ENCODE measurements at regions of chr6 and their contacts with region 1.

Region 1: GRCh38 chr6:37566111-37566949 is 66.6 kb upstream of the CCDC167 start:
- DNase-seq: peak; percentile 53 to 85 (median 62)
- H3K4me3 ChIP-seq: peak overlapping the region; percentile 30 to 71 (median 56)
- H3K27ac ChIP-seq: peak overlapping the region in 39 of 59 donors; percentile 9 to 82 (median 53)
- H3K27me3 ChIP-seq: no peaks in the 10 kb centered on the region
- CTCF ChIP-seq: peak; percentile 54 to 94 (median 86)

Region 2: DNA sequence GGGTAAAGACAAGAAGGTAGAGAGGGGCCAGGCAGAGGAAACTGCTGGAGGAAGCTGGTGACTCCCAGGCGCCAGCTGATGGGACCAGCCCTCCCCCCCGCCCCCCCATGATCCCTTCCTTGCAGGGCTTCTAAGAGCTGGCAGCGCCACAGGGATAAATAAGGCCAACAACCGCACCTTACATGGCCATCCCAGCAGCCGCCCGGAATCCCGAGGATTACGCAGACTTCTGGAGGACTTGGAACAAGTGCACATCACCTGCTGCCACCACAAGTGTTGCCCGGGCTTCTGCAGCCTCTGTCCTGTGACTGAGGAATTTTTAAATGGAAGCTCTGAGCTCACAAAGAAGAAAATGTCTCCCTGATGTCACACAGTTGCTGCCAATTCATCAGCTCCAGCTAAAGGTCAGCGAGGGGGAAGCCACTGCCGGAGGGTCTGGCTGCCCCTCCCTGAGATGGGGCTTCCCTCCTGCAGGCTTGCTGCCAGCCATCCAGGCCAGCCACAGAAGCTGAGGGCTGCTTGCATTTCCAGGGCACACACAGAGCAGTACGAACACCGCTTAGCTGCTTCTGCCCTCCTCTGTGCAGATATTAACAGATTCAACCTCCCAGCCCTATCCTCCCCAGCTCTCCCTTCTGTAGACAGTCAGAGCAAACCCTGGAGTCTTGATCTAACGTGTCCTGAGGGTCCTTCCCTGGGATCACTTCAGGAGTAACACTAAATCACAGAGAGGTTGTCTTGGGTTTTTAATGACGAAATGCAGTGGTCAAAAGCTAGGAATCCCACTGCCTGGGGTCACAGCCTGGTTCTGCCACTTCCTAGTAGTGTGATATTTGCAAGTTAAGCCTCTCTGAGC is 435.0 kb before region 1 on chr6:
- intact Hi-C with region 1: no loop called
- DNase-seq: peak in 4 of 10 donors; percentile 12 to 60 (median 35)
- H3K4me3 ChIP-seq: peak overlapping the region in 15 of 59 donors; percentile 0 to 35 (median 23)
- H3K27ac ChIP-seq: peak overlapping the region in 17 of 59 donors; percentile 1 to 73 (median 38)
- H3K27me3 ChIP-seq: no peaks in the 10 kb centered on the region
- CTCF ChIP-seq: no peak

Region 3: DNA sequence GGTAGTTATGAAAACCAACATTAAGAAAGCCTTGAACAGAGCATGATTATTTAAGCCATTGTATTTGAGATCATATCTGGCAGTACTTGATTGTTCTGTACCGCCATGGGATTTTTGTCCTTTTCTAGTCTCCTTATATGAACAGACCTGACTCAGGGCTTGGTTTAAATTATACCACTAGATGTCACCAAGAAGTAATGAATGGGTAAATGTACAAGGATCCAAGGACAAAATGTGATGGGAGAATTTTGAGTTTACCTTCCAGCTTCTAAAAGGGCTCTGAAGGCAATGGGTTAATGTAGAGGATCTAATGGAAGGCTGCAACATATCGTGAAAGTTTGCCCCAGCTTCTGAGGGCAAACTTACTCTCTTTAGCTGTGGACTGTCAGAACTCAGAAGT is 200.6 kb before region 1 on chr6:
- intact Hi-C with region 1: loop called in 1 of 2 experiments (anchors 5 kb)
- DNase-seq: no peak
- H3K4me3 ChIP-seq: no peak overlapping the region
- H3K27ac ChIP-seq: peak overlapping the region in 5 of 59 donors; percentile 4 to 41 (median 29)
- H3K27me3 ChIP-seq: no peaks in the 10 kb centered on the region
- CTCF ChIP-seq: peak in 52 of 56 donors; percentile 18 to 67 (median 44)

Region 4: DNA sequence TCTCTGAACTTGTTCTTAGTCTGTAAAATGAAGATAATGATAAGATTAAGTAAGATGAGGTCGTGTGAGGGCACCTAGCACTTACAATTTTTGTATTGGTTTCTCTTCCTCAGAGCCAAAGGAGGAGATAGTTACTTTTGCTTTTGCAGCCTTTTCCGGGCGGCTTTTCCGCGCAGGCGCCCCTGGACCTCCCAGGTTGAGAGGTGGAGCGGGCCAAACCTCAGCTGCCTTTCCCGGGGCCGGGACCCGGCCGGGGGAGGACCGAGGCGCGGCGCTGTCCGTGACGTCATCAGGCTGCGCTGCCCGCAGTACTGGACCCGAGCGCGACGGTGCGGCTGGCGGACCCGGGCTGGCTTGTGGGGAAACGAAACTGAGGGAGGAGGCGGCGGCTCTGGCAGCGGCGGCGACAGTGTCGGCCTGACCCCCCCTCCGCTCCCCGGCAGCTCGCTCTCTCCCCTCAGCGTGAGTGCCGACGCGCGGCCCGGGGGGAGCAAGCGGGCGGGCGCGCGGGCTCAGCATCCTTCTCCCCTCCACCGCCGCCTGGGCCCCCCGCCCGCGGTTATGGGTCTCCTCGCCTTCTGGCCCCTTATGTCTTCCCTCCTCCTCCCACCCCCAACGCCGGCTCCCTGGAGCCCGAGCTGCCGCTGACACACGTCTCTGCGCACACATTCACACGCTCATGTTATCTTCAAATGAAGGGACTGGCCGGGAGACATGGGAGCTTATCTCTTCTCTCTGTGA is 133.2 kb before region 1 on chr6 and contains the start of gene CMTR1:
- intact Hi-C with region 1: loop called in 1 of 2 experiments (anchors 5 kb)
- DNase-seq: peak; percentile 85 to 95 (median 92)
- H3K4me3 ChIP-seq: peak within 1 kb of the TSS; percentile 60 to 98 (median 92)
- H3K27ac ChIP-seq: peak within 1 kb of the TSS; percentile 37 to 97 (median 90)
- H3K27me3 ChIP-seq: peaks cover 0 to 2% (median 0%) of the 10 kb centered on the region in 45 donors
- CTCF ChIP-seq: peak in 37 of 56 donors; percentile 11 to 57 (median 38)
- total RNA-seq, gene CMTR1: 39.1 to 69.9 (median 54.8) TPM

Region 5: DNA sequence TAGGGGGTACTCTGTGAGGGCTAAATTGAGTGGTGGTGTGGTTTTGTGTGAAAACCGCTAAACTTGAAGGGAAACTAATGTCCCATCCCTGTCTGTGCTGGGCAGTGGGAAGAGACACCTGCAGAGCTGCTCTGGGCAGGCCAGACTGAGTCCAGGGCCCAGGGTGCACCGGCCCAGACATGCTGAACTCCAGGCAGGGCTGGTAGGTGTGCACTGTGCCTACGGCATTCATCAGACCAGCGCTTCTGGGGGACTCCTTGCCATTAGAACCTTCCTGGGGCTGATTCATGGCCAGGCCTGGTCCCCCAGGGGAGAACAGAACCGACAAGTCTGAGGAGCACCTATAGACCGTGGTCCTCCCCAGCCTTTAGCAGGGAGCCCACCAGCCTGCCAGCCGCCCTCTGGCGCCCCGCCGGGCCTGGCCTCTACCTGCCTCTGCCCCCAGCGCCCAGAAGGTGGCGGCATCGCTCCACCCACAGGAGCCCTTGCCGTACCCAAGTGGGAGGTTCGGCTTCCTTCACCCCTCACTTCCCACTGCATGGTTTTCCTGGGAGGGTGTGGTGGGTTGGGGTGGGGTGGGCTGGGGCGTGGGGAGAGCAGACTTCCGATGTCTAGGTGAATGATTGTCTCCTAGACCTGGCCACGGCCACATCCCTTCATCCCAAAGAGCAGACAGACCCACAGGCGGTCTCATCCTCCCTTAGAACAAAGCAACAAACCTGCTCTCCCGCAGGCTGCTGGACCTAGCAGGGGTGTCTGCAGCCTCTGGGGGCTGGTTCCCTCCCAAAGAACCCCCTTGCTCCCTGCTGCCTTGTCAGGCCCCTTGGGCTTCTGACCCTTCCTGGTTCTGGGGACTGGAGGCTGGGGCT is 82.2 kb before region 1 on chr6:
- intact Hi-C with region 1: loop called (anchors 2 to 5 kb)
- DNase-seq: peak; percentile 57 to 83 (median 66)
- H3K4me3 ChIP-seq: no peak overlapping the region
- H3K27ac ChIP-seq: peak overlapping the region in 3 of 59 donors; percentile 2 to 34 (median 3)
- H3K27me3 ChIP-seq: no peaks in the 10 kb centered on the region
- CTCF ChIP-seq: peak; percentile 26 to 89 (median 77)

Region 6: DNA sequence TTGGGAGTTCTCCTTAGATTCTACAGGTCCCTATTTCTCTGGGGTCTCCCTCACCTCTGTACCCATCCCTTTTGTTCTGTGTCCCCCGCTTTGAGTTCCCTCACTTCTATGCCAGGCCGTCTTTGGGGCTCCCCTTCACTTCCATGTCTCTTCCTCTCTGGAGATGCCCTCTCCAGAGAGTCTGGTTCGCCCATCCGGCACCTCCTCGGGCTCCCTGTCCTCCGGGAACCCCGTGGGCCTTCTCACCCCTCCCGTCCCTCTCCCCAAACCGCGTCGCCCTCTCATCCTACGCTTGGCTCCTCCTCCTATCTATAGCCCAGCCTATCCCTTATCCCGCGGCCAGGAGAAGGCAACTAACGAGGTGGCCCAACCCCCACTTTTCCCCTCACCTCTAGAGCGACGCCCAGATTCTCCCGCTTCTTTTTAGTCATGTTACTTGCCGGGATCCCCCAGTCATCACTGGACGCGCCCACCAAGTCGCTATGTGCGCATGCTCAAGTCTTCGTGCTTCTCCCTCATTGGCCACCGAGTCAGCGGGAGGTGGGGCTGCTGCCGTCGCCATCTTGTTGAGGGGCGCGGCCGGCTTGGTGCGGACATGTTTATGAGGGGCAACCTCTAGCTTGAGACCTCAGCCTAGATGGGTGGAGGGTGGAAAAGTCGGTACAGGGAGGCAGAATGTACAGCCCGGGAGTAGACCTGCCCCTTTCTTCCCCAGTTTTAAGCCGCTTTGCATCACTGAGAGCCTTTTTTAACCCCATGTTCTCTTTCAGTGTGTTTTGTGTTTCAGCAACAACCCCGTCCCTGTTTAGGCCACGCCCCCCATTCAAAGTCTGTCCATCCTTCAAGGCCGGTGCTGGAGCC is 66.7 kb before region 1 on chr6 and contains the start of gene CCDC167:
- intact Hi-C with region 1: loop called in 1 of 2 experiments (anchors 5 kb)
- DNase-seq: peak; percentile 89 to 96 (median 94)
- H3K4me3 ChIP-seq: peak within 1 kb of the TSS; percentile 50 to 90 (median 78)
- H3K27ac ChIP-seq: peak within 1 kb of the TSS in 45 of 59 donors; percentile 4 to 87 (median 61)
- H3K27me3 ChIP-seq: no peaks in the 10 kb centered on the region
- CTCF ChIP-seq: peak in 20 of 56 donors; percentile 6 to 58 (median 22)
- total RNA-seq, gene CCDC167: 4.7 to 37.8 (median 16.6) TPM

Measured in dorsolateral prefrontal cortex (tissue), 120 donors.